WTC11 (cell line): ENCODE measurements at regions of chr5 and their contacts with region 1.

Region 1: GRCh38 chr5:38420691-38421390 is 135.6 kb downstream of the LIFR start:
- DNase-seq: peak; percentile 54
- ATAC-seq: peak; percentile 83
- H3K4me3 Mint-ChIP-seq: no peak overlapping the region
- H3K27ac Mint-ChIP-seq: no peak overlapping the region
- H3K4me1 Mint-ChIP-seq: peaks cover 22% of the 10 kb centered on the region
- H3K27me3 Mint-ChIP-seq: no peaks in the 10 kb centered on the region
- CTCF ChIP-seq: peak; percentile 59

Region 2: GRCh38 chr5:38184627-38185026 is 236.2 kb before region 1 on chr5:
- CTCF ChIA-PET with region 1: no interaction called
- POLR2A ChIA-PET with region 1: no interaction called
- DNase-seq: no peak
- ATAC-seq: no peak
- H3K4me3 Mint-ChIP-seq: no peak overlapping the region
- H3K27ac Mint-ChIP-seq: no peak overlapping the region
- H3K4me1 Mint-ChIP-seq: peaks cover 18% of the 10 kb centered on the region
- H3K27me3 Mint-ChIP-seq: peaks cover 4% of the 10 kb centered on the region; the same call in 1 of the 2 replicates
- CTCF ChIP-seq: no peak

Region 3: DNA sequence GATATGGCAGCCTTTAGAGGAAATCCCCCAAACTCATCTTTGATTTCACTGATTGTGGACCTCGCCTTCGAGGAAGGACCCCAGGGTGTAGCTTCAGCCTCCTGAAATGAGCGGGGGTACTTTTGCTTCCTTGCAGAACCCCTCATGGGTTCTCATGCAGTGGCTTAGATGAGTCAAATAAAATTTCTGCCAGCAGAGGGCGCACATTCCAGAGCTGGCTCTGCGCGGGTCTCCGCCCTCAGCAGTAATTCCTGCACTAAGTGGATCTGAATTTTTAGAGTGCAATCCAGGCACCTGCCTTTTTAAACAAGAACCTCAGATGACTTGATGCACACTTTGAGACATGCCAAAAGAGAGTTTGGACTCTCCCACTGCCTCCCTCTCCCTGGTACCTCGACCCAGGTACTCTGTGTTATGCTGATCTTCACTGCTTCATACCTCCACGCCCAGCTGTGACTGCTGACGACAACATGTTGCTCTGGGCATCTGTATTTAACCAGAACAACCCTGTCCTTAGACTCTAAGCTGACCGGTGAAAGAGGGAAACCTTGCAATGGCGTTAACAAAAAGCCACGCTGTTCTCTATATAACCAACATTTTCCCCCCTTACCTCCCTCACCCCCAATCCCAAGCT is 155.2 kb before region 1 on chr5:
- CTCF ChIA-PET with region 1: interaction called, 11 read pairs
- POLR2A ChIA-PET with region 1: no interaction called
- DNase-seq: peak; percentile 84
- ATAC-seq: peak; percentile 98
- H3K4me3 Mint-ChIP-seq: peak overlapping the region; percentile 40
- H3K27ac Mint-ChIP-seq: no peak overlapping the region
- H3K4me1 Mint-ChIP-seq: 0 out of 2 replicates have a peak, but pooled peaks cover 4% of the 10 kb centered on the region
- H3K27me3 Mint-ChIP-seq: peaks cover 42% of the 10 kb centered on the region
- CTCF ChIP-seq: peak; percentile 73

Region 4: DNA sequence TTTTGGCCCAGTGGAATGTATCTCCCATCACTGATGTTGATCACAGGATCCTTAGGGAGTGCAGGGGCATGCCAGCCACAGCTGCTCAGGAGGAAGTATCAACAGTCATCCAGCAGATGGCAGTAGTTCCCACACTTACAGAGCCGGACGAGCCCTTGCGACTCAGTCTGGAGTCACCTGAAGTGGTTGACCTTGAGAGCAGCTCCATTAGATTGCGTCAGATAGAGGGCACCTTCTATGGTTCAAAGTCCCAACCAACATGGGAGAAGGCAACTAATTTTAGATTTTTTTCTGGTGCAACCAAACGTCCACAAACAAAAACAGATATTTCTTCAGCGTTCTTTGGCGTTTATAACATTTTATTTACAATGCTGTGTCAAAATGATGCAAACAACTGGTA is 37.9 kb before region 1 on chr5:
- CTCF ChIA-PET with region 1: interaction called, 11 read pairs
- POLR2A ChIA-PET with region 1: interaction called, 4 read pairs
- DNase-seq: peak; percentile 81
- ATAC-seq: peak; percentile 93
- H3K4me3 Mint-ChIP-seq: no peak overlapping the region
- H3K27ac Mint-ChIP-seq: no peak overlapping the region
- H3K4me1 Mint-ChIP-seq: peaks cover 50% of the 10 kb centered on the region
- H3K27me3 Mint-ChIP-seq: no peaks in the 10 kb centered on the region
- CTCF ChIP-seq: peak; percentile 65

Region 5: DNA sequence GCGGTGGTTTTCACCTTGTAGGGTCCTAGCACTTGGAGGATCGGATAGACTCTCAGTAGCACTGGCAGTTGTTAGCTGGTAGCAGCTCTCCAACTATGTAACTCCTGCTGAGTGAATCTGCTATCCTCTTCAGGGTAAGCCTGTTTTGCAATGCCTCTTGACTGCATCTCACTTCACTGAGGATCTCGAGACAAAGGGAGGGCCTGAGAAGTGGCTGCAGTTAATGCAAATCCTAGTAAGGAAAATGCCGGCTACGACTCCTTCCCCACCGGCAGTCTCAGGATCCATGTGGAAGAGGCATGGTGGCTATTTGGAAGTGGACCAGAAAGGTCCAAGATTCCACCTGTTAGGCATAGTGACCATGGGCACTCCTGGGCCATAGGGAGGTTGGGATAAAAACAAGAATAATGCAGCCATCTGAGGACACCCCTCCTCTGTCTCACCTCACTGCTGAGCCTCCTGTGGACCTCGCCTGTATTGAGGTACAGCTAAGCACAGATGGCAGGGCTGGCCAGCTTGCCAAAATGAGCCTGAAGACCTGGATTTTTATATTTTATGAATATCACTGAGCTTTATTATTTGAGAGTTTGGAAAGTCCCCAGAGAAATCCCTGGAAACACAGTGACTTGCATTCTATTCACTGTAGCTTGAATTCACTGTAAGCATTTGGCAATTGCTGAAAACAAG is 10.4 kb before region 1 on chr5:
- CTCF ChIA-PET with region 1: interaction called, 20 read pairs
- POLR2A ChIA-PET with region 1: no interaction called
- DNase-seq: no peak
- ATAC-seq: peak; percentile 58
- H3K4me3 Mint-ChIP-seq: no peak overlapping the region
- H3K27ac Mint-ChIP-seq: no peak overlapping the region
- H3K4me1 Mint-ChIP-seq: peaks cover 15% of the 10 kb centered on the region
- H3K27me3 Mint-ChIP-seq: no peaks in the 10 kb centered on the region
- CTCF ChIP-seq: no peak

Region 6: GRCh38 chr5:38463634-38464521 is 43.0 kb after region 1 on chr5:
- CTCF ChIA-PET with region 1: interaction called, 16 read pairs
- POLR2A ChIA-PET with region 1: no interaction called
- DNase-seq: no peak
- ATAC-seq: no peak
- H3K4me3 Mint-ChIP-seq: no peak overlapping the region
- H3K27ac Mint-ChIP-seq: no peak overlapping the region
- H3K4me1 Mint-ChIP-seq: peaks cover 9% of the 10 kb centered on the region
- H3K27me3 Mint-ChIP-seq: no peaks in the 10 kb centered on the region
- CTCF ChIP-seq: no peak

Region 7: DNA sequence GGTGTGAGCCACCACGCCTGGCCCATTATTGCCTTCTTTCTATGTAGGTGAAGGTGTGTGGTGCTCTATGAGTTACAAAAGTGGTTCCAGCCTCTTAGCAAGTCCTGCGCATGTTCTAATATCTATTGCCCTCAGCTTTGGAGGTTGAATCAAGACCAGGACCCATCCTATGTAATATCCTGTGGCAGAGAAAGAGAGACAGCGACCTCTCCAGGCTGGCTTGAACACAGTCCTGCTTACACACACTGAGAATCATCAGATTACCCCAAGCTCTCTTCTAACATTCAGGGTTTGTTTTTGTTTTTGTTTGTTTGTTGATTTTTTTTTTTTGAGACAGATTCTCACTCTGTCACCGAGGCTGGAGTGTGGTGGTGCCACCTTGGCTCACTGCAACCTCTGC is 330.3 kb after region 1 on chr5:
- CTCF ChIA-PET with region 1: interaction called, 14 read pairs
- POLR2A ChIA-PET with region 1: interaction called, 10 read pairs
- DNase-seq: peak; percentile 39
- ATAC-seq: peak; percentile 88
- H3K4me3 Mint-ChIP-seq: no peak overlapping the region
- H3K27ac Mint-ChIP-seq: no peak overlapping the region
- H3K4me1 Mint-ChIP-seq: no peaks in the 10 kb centered on the region; the same call in 1 of the 2 replicates
- H3K27me3 Mint-ChIP-seq: no peaks in the 10 kb centered on the region; the same call in 1 of the 2 replicates
- CTCF ChIP-seq: no peak

Region 8: GRCh38 chr5:38809388-38810359 is 388.8 kb after region 1 on chr5:
- CTCF ChIA-PET with region 1: interaction called, 43 read pairs
- POLR2A ChIA-PET with region 1: no interaction called
- DNase-seq: peak; percentile 81
- ATAC-seq: peak; percentile 97
- H3K4me3 Mint-ChIP-seq: no peak overlapping the region
- H3K27ac Mint-ChIP-seq: no peak overlapping the region
- H3K4me1 Mint-ChIP-seq: peaks cover 15% of the 10 kb centered on the region
- H3K27me3 Mint-ChIP-seq: peaks cover 4% of the 10 kb centered on the region; the same call in 1 of the 2 replicates
- CTCF ChIP-seq: peak; percentile 81